B cell (primary cell): ENCODE measurements at regions of chr18 and their contacts with region 1.

Region 1: GRCh38 chr18:839224-840022 is 27.4 kb upstream of the YES1 start:
- DNase-seq: peak; percentile 76
- ATAC-seq: peak; percentile 67
- H3K4me3 ChIP-seq: no peak overlapping the region
- H3K4me3 Mint-ChIP-seq: no peak overlapping the region
- H3K27ac ChIP-seq: no peak overlapping the region
- H3K27ac Mint-ChIP-seq: no peak overlapping the region
- H3K4me1 ChIP-seq: no peaks in the 10 kb centered on the region
- H3K4me1 Mint-ChIP-seq: no peaks in the 10 kb centered on the region
- H3K27me3 ChIP-seq: peaks cover 0 to 3% (median 0%) of the 10 kb centered on the region in 4 experiments
- H3K27me3 Mint-ChIP-seq: peaks cover 15% of the 10 kb centered on the region
- CTCF ChIP-seq: peak; percentile 94

Region 2: DNA sequence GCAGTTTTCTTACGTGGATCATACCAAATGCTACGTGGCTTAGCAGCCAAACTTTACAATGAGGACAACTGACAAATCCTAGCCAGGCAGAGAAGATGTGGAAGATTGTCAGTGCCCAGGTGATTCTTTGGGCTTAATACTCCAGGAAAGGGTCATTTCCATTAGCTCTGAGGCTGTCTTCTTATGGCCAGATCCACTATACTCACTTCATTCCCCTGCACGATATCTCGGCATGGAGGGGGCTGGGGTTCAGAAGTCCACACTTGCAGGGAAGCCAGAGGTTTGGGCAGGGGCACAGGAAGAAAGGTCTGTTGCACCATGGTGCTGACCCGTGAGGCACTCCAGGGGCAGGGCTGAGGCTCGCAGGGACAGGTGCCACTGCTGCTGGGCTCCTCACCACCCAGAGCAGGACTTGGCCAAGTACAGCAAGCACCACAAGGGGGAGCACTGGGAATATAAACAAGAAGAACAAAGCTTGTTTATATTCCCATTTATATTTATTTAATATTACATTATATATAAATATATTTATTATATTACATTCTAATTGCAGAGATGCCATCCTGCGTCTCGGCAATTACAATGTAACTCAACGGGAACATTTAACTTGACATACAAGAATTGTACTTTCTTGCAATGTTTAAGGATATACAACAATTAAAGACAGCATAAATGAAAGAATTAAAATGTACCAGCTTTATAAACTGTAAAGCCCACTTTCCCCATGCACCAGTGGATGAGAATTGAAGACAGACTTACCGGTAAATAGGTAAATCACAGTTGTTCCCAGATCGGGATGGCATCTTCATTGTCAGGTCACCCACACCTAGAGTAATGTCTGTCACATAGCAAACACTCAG is 215.4 kb before region 1 on chr18:
- CTCF ChIA-PET with region 1: interaction called, 30 read pairs
- POLR2A ChIA-PET with region 1: no interaction called
- intact Hi-C with region 1: loop called (anchors 1 kb)
- DNase-seq: peak; percentile 52
- ATAC-seq: peak; percentile 49
- H3K4me3 ChIP-seq: no peak overlapping the region
- H3K4me3 Mint-ChIP-seq: no peak overlapping the region
- H3K27ac ChIP-seq: no peak overlapping the region
- H3K27ac Mint-ChIP-seq: no peak overlapping the region
- H3K4me1 ChIP-seq: no peaks in the 10 kb centered on the region
- H3K4me1 Mint-ChIP-seq: no peaks in the 10 kb centered on the region
- H3K27me3 ChIP-seq: peaks cover 0 to 2% (median 0%) of the 10 kb centered on the region in 4 experiments
- H3K27me3 Mint-ChIP-seq: peaks cover 24% of the 10 kb centered on the region
- CTCF ChIP-seq: peak; percentile 70

Region 3: GRCh38 chr18:741931-742512 is 97.4 kb before region 1 on chr18:
- CTCF ChIA-PET with region 1: interaction called, 18 read pairs
- POLR2A ChIA-PET with region 1: no interaction called
- intact Hi-C with region 1: loop called (anchors 1 kb)
- DNase-seq: peak; percentile 41
- ATAC-seq: peak; percentile 60
- H3K4me3 ChIP-seq: no peak overlapping the region
- H3K4me3 Mint-ChIP-seq: no peak overlapping the region
- H3K27ac ChIP-seq: no peak overlapping the region
- H3K27ac Mint-ChIP-seq: no peak overlapping the region
- H3K4me1 ChIP-seq: no peaks in the 10 kb centered on the region
- H3K4me1 Mint-ChIP-seq: no peaks in the 10 kb centered on the region
- H3K27me3 ChIP-seq: no peaks in the 10 kb centered on the region
- H3K27me3 Mint-ChIP-seq: peaks cover 2% of the 10 kb centered on the region
- CTCF ChIP-seq: peak; percentile 83

Region 4: DNA sequence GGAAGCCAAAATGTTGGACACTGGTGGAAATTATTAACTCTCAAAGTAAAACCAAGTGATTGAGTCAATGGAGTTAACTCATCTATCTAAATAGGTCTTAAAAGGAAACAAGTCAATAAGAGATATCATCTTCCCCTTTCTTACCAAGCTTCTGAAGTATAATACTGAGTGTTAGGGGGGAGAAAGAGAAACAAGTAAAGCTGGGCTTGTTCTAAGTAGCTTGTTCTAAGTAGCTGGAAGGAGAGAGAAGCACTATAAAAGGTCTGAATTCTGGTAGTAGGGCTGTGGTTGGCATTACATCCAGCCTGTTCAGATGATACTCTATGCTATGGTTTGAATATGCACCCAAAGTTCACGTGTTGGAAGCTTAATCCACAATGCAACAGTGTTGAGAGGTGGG is 54.2 kb before region 1 on chr18:
- CTCF ChIA-PET with region 1: no interaction called
- POLR2A ChIA-PET with region 1: no interaction called
- intact Hi-C with region 1: no loop called
- DNase-seq: no peak
- ATAC-seq: no peak
- H3K4me3 ChIP-seq: no peak overlapping the region
- H3K4me3 Mint-ChIP-seq: no peak overlapping the region
- H3K27ac ChIP-seq: no peak overlapping the region
- H3K27ac Mint-ChIP-seq: no peak overlapping the region
- H3K4me1 ChIP-seq: no peaks in the 10 kb centered on the region
- H3K4me1 Mint-ChIP-seq: no peaks in the 10 kb centered on the region
- H3K27me3 ChIP-seq: peaks cover 0 to 12% (median 2%) of the 10 kb centered on the region in 4 experiments
- H3K27me3 Mint-ChIP-seq: peaks cover 12% of the 10 kb centered on the region
- CTCF ChIP-seq: no peak

Region 5: GRCh38 chr18:820591-821165 is 18.7 kb before region 1 on chr18:
- CTCF ChIA-PET with region 1: interaction called, 16 read pairs
- POLR2A ChIA-PET with region 1: no interaction called
- intact Hi-C with region 1: no loop called
- DNase-seq: no peak
- ATAC-seq: no peak
- H3K4me3 ChIP-seq: no peak overlapping the region
- H3K4me3 Mint-ChIP-seq: no peak overlapping the region
- H3K27ac ChIP-seq: no peak overlapping the region
- H3K27ac Mint-ChIP-seq: no peak overlapping the region
- H3K4me1 ChIP-seq: no peaks in the 10 kb centered on the region
- H3K4me1 Mint-ChIP-seq: no peaks in the 10 kb centered on the region
- H3K27me3 ChIP-seq: peaks cover 1 to 30% (median 23%) of the 10 kb centered on the region in 4 experiments
- H3K27me3 Mint-ChIP-seq: peaks cover 51% of the 10 kb centered on the region
- CTCF ChIP-seq: no peak

Region 6: DNA sequence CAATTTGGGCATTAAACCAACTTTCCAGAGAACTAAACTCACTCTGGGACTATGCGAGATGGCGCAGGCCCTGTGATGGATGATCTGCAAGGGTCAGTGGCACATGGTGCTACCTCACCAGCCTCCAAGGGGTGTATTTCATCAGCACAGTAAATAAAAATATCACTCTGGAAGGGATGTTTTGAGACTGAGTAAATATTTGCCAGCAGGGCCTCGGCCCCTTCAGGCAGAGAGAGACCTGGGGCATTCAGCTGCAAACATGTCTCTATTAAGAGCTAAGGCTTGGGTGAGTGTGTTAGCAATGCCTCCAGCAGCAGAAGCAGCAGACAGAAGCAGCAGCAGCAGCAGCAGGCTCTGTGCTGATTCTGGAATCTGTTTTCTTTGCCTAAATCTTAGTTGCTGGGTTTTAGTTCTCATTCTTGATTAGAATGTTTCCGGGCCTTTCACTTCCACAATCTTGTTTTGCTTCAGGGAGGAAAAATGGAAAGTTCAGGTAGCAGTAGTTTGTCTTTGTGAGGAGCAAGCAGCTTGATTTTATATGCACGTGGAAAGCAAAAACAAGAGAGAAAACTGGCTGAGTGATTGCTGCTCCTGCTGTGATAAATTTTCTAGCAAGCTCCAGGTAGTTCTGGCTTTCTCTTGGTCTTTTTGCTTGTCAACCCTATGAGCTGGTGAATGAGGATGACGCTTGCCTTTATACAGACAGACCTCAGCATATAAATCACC is 83.9 kb after region 1 on chr18:
- CTCF ChIA-PET with region 1: no interaction called
- POLR2A ChIA-PET with region 1: no interaction called
- intact Hi-C with region 1: no loop called
- DNase-seq: no peak
- ATAC-seq: no peak
- H3K4me3 ChIP-seq: no peak overlapping the region
- H3K4me3 Mint-ChIP-seq: no peak overlapping the region
- H3K27ac ChIP-seq: no peak overlapping the region
- H3K27ac Mint-ChIP-seq: no peak overlapping the region
- H3K4me1 ChIP-seq: no peaks in the 10 kb centered on the region
- H3K4me1 Mint-ChIP-seq: no peaks in the 10 kb centered on the region
- H3K27me3 ChIP-seq: peaks cover 0 to 4% (median 1%) of the 10 kb centered on the region in 4 experiments
- H3K27me3 Mint-ChIP-seq: peaks cover 20% of the 10 kb centered on the region
- CTCF ChIP-seq: no peak